ENCODE measurements at regions of chr7 and their contacts with region 1.

Region 1: GRCh38 chr7:50679218-50680007 is 103.3 kb downstream of the GRB10 start:
- DNase-seq: no peak
- H3K4me3 Mint-ChIP-seq: no peak overlapping the region
- H3K27ac Mint-ChIP-seq: no peak overlapping the region
- H3K4me1 Mint-ChIP-seq: peaks cover 36% of the 10 kb centered on the region
- H3K27me3 Mint-ChIP-seq: no peaks in the 10 kb centered on the region
- CTCF ChIP-seq: no peak

Region 2: DNA sequence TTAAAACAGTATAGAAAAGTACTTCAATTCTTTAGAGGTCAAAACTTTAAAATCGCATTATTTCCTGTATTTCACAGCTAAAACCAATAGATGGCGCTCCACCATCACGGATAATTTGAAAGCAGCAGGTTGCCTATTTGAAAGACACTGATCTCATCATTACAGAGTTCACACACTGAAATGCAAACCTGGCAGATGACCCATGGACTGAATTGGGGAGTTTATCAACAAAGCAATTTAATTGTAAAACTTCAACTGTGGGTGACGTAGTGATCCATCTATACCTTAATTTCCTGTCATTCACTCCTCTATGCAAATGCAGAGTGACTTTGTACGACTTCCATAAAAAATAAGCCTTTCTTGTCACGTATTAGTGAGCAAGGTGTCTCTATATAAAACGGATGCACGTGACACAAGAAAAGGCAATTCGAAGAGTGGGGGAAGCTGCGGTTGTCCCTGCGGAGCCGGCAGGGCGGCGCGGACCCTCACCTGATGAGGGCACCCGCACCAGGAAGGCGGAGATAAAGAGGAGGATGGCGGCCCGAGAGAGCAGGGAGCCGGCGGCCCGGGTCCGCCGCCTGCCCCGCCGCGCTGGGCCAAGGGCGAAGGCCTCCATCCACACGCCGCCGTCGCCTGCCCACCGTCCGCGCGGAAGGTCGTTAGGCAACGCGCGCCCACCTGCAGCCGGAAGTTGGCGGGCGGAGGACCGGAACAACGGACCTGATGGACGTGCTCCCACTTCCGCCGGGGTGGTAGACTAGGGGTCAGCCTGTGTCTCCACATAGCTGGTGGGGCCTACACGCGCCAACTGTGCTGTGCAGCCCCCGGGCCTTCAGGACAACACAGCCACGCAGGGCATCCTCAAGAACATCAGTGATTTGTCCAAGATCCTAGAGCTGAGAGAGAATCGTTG is 586.6 kb before region 1 on chr7 and contains the start of gene ZPBP:
- CTCF ChIA-PET with region 1: no interaction called
- intact Hi-C with region 1: loop called (anchors 5 kb)
- DNase-seq: peak; percentile 38
- H3K4me3 Mint-ChIP-seq: no peak within 1 kb of the TSS
- H3K27ac Mint-ChIP-seq: no peak within 1 kb of the TSS
- H3K4me1 Mint-ChIP-seq: no peaks in the 10 kb centered on the region
- H3K27me3 Mint-ChIP-seq: peaks cover 44% of the 10 kb centered on the region
- CTCF ChIP-seq: peak; percentile 87
- total RNA-seq, gene ZPBP: not detected in 2 replicates

Region 3: GRCh38 chr7:50142425-50143017 is 536.9 kb before region 1 on chr7:
- CTCF ChIA-PET with region 1: no interaction called
- intact Hi-C with region 1: loop called (anchors 2 kb)
- DNase-seq: peak; percentile 29
- H3K4me3 Mint-ChIP-seq: no peak overlapping the region
- H3K27ac Mint-ChIP-seq: no peak overlapping the region
- H3K4me1 Mint-ChIP-seq: no peaks in the 10 kb centered on the region
- H3K27me3 Mint-ChIP-seq: peaks cover 46% of the 10 kb centered on the region
- CTCF ChIP-seq: peak; percentile 73

Region 4: GRCh38 chr7:50206453-50207250 is 472.8 kb before region 1 on chr7:
- CTCF ChIA-PET with region 1: no interaction called
- intact Hi-C with region 1: loop called (anchors 5 kb)
- DNase-seq: no peak
- H3K4me3 Mint-ChIP-seq: no peak overlapping the region
- H3K27ac Mint-ChIP-seq: no peak overlapping the region
- H3K4me1 Mint-ChIP-seq: peaks cover 7% of the 10 kb centered on the region
- H3K27me3 Mint-ChIP-seq: peaks cover 96% of the 10 kb centered on the region
- CTCF ChIP-seq: no peak

Region 5: DNA sequence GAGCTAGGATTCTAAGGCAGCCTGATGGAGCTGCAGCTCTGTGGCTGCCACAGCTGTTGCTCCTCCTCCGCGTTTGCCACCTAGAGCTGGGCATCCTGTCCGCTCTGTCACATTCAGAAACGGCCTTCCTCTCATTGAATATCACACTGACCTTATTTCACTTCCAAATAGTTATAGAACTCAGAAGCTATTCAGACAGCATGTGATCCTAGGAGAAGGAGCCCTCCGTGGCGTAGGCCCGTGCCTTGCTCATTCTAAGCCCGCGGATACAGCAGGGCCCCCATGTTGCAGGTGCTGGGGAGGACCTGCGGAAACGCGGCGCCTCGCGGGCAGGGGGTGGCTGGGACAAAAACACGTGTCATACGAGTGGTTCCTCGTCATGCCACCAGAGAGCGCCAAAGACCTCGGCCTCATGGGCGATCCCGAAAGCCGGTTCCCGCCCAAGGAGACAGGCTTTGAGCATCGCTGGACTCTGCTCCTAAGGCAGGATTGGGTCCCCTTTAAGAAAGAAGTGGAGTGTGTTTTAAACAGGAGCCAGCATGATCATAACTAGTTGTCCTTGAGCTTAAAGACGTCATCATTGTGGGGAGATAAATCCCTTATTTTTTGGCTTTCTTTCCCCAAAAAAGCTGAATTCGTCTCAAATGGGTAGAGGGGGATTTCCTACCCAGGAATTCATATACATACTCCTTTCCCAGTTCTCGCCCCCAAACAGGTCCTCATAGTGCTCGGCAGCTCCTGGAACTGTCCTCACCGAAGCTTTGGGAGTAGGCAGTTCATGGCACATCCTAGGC is 211.4 kb before region 1 on chr7:
- CTCF ChIA-PET with region 1: no interaction called
- intact Hi-C with region 1: loop called (anchors 1 kb)
- DNase-seq: peak; percentile 93
- H3K4me3 Mint-ChIP-seq: peak overlapping the region; percentile 25
- H3K27ac Mint-ChIP-seq: peak overlapping the region; percentile 13
- H3K4me1 Mint-ChIP-seq: no peaks in the 10 kb centered on the region
- H3K27me3 Mint-ChIP-seq: no peaks in the 10 kb centered on the region
- CTCF ChIP-seq: peak; percentile 96

Region 6: GRCh38 chr7:50552921-50553320 is 126.5 kb before region 1 on chr7:
- CTCF ChIA-PET with region 1: no interaction called
- intact Hi-C with region 1: no loop called
- DNase-seq: no peak
- H3K4me3 Mint-ChIP-seq: no peak overlapping the region
- H3K27ac Mint-ChIP-seq: no peak overlapping the region
- H3K4me1 Mint-ChIP-seq: no peaks in the 10 kb centered on the region
- H3K27me3 Mint-ChIP-seq: no peaks in the 10 kb centered on the region
- CTCF ChIP-seq: no peak

Region 7: DNA sequence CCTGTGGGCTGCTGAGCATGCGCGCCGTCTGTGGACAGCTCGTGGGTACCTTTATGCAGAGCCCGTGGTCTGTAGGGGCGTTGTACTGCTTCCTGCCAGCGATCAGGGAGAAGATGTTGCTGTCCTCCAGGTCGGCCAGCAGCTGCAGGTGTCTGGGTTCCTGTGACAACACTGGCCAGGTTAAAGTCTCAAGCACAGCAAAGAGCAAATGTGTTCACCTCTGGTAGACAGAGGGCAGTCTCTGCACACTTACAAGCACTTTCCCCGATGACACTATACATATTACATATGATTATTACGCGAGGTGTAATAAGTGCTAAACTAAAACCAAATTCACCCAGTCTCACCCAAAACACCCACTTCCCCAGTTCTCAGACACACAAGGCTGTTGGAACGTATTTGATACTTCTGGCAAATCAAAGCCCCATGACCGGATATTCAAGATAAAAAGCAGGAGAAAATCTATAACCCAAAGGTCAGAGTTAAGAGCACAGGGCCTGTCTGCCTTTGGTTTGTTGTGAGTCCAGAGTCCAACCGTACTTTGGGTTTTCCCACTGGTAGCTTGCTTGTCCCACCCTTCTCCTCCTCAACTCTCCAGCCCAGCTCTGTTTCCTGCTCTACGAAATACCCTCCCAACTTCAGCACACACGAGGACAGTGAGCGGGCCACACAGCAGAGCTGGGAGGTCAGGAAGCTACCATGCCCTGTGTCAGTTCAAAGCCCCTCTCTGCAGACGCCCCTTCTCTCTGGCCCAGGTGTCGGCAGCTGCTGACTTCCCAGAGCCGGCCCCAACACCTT is 64.5 kb before region 1 on chr7:
- CTCF ChIA-PET with region 1: no interaction called
- intact Hi-C with region 1: loop called (anchors 2 kb)
- DNase-seq: no peak
- H3K4me3 Mint-ChIP-seq: peak overlapping the region; percentile 20
- H3K27ac Mint-ChIP-seq: no peak overlapping the region
- H3K4me1 Mint-ChIP-seq: peaks cover 34% of the 10 kb centered on the region
- H3K27me3 Mint-ChIP-seq: no peaks in the 10 kb centered on the region
- CTCF ChIP-seq: peak; percentile 40

Measured in Calu3 (cell line).